PC-9 (cell line): ENCODE measurements at regions of chr1 and their contacts with region 1.

Region 1: GRCh38 chr1:93749894-93750301 is 68.3 kb upstream of the BCAR3 start:
- DNase-seq: peak in 1 of 2 experiments; percentile 82
- H3K4me3 ChIP-seq: no peak overlapping the region
- H3K27ac ChIP-seq: peak overlapping the region; percentile 49
- H3K4me1 ChIP-seq: peaks cover 53% of the 10 kb centered on the region
- H3K27me3 ChIP-seq: no peaks in the 10 kb centered on the region
- CTCF ChIP-seq: no peak; the same call in 1 of the 2 replicates

Region 2: GRCh38 chr1:93701619-93702018 is 48.3 kb before region 1 on chr1:
- CTCF ChIA-PET with region 1: interaction called, 3 read pairs
- POLR2A ChIA-PET with region 1: interaction called, 3 read pairs
- intact Hi-C with region 1: loop called (anchors 1 kb)
- DNase-seq: peak; percentile 97 to 100
- H3K4me3 ChIP-seq: no peak overlapping the region
- H3K27ac ChIP-seq: peak overlapping the region; percentile 97
- H3K4me1 ChIP-seq: peaks cover 68% of the 10 kb centered on the region
- H3K27me3 ChIP-seq: no peaks in the 10 kb centered on the region
- CTCF ChIP-seq: no peak